Endothelial cell of umbilical vein (primary cell): ENCODE measurements at regions of chr14 and their contacts with region 1.

Region 1: DNA sequence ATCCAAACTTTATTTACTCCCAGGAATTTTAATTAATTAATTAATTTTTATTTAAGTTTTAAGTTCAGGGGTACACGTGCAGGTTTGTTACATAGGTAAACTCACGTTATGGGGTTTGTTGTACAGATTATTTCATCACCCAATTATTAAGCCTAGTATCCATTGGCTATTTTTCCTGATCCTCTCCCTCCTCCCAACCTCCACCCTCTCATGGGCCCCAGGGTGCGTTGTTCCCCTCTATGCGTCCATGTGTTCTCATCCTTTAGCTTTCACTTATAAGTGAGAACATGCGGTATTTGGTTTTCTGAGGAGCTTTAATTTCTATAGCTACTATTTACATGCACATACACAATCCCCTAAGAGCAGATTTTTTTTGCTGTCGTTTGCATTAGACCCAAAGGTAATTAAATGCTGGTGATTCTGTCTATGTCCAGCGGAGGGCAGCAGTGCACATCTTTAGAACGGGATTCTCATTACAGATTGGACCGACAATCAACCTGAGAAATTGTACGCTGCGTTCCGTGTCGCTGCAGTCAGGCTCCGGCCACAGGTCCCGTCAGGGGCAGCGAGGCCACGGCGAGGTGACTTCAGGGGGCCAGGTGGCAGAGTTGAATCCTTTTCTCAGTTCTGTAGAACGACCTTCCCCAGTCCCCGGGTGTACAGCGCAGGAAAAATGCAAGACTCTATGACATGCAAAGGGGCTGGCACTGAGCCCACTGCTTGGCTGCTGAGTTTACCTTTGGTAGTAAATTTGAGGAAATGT is 11.6 kb downstream of the TMEM30B start:
- DNase-seq: peak; percentile 90
- H3K4me3 ChIP-seq: peak overlapping the region in 2 of 3 experiments; percentile 33 to 39
- H3K27ac ChIP-seq: no peak overlapping the region
- H3K4me1 ChIP-seq: no peaks in the 10 kb centered on the region
- H3K27me3 ChIP-seq: peaks cover 15 to 17% of the 10 kb centered on the region in 2 experiments
- CTCF ChIP-seq: peak; percentile 66 to 71
- POLR2A ChIP-seq: no peak

Region 2: GRCh38 chr14:60980811-60981632 is 288.5 kb before region 1 on chr14 and contains the starts of genes SLC38A6 and TRMT5:
- CTCF ChIA-PET with region 1: no interaction called
- POLR2A ChIA-PET with region 1: no interaction called
- dilution Hi-C with region 1: no loop called
- intact Hi-C with region 1: no loop called
- DNase-seq: peak; percentile 98
- H3K4me3 ChIP-seq: peak within 1 kb of the TSS; percentile 27 to 72 (median 61)
- H3K27ac ChIP-seq: peak within 1 kb of the TSS; percentile 83
- H3K4me1 ChIP-seq: peaks cover 46% of the 10 kb centered on the region
- H3K27me3 ChIP-seq: no peaks in the 10 kb centered on the region
- CTCF ChIP-seq: no peak
- POLR2A ChIP-seq: peak; percentile 51
- total RNA-seq, gene SLC38A6: 21.6 and 24.6 TPM in 2 replicates
- total RNA-seq, gene TRMT5: 12.6 and 13.5 TPM in 2 replicates

Region 3: DNA sequence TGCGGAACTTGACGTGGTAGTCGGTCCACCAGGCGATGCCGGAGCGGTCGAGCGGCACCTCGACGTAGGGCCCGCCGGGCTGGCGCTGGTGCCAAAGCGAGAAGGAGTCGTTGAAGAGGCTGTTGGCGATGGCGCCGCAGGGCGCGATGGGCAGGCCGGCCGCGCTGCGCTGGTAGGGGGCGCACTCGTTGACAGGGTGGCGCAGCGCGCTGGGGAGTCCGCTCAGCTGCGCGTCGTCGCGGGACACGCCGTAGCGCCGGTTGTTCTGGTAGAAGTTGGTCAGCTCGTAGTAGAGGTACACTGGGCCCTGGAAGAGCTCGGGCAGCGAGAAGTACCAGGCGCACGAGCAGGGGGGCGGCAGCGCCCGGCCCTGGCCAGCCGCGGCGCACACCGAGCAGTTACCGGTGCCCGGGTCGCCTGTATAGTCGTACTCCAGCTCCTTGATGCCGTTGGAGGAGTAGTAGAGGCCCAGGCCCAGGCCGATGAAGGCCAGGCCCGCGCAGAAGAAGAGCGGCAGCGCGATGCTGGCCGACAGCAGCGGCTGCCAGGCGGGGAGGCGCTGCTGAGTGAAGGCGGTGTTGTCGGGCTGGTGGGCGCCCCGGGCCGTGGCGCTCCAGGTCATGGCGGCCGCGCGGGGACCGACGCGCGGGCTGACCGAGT is 11.2 kb after region 1 on chr14:
- CTCF ChIA-PET with region 1: interaction called, 38 read pairs
- POLR2A ChIA-PET with region 1: no interaction called
- dilution Hi-C with region 1: no loop called
- intact Hi-C with region 1: no loop called
- DNase-seq: peak; percentile 86
- H3K4me3 ChIP-seq: peak overlapping the region; percentile 12 to 37 (median 28)
- H3K27ac ChIP-seq: no peak overlapping the region
- H3K4me1 ChIP-seq: peaks cover 15% of the 10 kb centered on the region
- H3K27me3 ChIP-seq: peaks cover 0 to 2% of the 10 kb centered on the region in 2 experiments
- CTCF ChIP-seq: peak; percentile 60 to 76
- POLR2A ChIP-seq: peak; percentile 33

Region 4: DNA sequence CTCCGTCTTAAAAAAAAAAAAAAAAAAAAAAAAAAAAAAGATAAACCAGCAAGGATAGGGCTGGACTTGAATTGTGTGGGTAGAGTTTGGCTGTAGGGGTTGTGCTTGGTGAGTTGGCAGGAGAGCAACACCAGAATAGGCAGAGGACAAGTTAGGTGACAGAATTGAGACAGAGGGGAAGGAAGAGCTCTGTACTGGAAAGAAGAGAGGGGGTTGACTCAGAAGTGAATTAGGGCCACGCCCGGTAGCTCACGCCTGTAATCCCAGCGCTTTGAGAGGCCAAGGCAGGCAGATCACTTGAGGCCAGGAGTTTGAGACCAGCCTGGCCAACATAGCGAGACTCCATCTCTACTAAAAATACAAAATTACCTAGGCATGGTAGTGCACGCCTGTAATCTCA is 17.7 kb after region 1 on chr14:
- CTCF ChIA-PET with region 1: interaction called, 38 read pairs
- POLR2A ChIA-PET with region 1: no interaction called
- dilution Hi-C with region 1: no loop called
- intact Hi-C with region 1: loop called (anchors 1 kb)
- DNase-seq: no peak
- H3K4me3 ChIP-seq: no peak overlapping the region
- H3K27ac ChIP-seq: no peak overlapping the region
- H3K4me1 ChIP-seq: peaks cover 10% of the 10 kb centered on the region
- H3K27me3 ChIP-seq: no peaks in the 10 kb centered on the region
- CTCF ChIP-seq: no peak
- POLR2A ChIP-seq: no peak

Region 5: GRCh38 chr14:61456720-61457119 is 187.2 kb after region 1 on chr14:
- CTCF ChIA-PET with region 1: no interaction called
- POLR2A ChIA-PET with region 1: no interaction called
- dilution Hi-C with region 1: no loop called
- intact Hi-C with region 1: loop called (anchors 1 kb)
- DNase-seq: peak; percentile 72
- H3K4me3 ChIP-seq: no peak overlapping the region
- H3K27ac ChIP-seq: no peak overlapping the region
- H3K4me1 ChIP-seq: peaks cover 22% of the 10 kb centered on the region
- H3K27me3 ChIP-seq: no peaks in the 10 kb centered on the region
- CTCF ChIP-seq: peak; percentile 75 to 79
- POLR2A ChIP-seq: no peak